MCF 10A (cell line): ENCODE measurements at regions of chr11 and their contacts with region 1.

Region 1: DNA sequence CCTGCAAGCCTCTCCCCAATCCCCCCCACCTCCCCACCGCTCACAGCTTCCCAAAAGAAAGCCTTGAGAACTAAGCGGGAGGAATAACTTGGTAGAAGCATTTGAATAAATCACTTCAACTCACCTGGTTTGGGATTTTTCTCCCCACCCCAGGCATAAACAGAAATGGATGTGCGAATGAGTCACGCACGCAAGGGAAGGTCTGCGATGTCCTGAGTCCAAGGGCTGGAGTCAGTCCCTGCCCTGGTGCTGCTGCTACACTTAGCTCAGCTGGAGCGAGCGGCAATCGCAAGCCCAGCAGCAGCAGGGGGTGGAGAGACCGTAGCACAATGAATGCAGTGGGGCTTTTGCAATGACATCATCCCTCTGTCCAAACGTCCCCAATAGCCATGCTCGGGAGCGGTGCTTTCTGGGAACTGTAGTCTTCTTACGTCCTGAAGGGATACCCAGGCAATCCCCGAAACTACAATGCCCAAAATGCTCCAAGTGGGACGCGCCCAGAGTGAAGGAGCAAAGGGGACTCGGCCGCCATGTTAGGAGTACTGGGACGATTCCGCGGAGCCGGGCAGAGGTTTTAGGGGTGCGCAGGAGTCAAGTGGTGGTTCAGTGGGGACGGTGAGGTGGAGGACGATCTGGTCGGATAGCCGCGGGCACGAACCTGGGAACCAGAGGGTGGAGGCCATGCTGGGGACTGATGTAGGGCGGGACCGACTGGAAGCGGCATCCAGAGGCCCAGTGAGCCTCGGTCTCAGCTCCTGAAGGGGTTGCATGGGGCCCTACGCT is at the start of gene RAB30:
- DNase-seq: peak; percentile 100
- H3K4me3 Mint-ChIP-seq: no peak within 1 kb of the TSS
- H3K27ac Mint-ChIP-seq: no peak within 1 kb of the TSS
- H3K4me1 Mint-ChIP-seq: peaks cover 26% of the 10 kb centered on the region
- H3K27me3 Mint-ChIP-seq: no peaks in the 10 kb centered on the region
- CTCF ChIP-seq: no peak
- total RNA-seq, gene RAB30: 12.5 and 13.2 TPM in 2 replicates

Region 2: GRCh38 chr11:82823647-82824619 is 247.8 kb before region 1 on chr11:
- CTCF ChIA-PET with region 1: no interaction called
- POLR2A ChIA-PET with region 1: no interaction called
- intact Hi-C with region 1: no loop called
- DNase-seq: no peak
- H3K4me3 Mint-ChIP-seq: no peak overlapping the region
- H3K27ac Mint-ChIP-seq: peak overlapping the region; percentile 4
- H3K4me1 Mint-ChIP-seq: peaks cover 3% of the 10 kb centered on the region
- H3K27me3 Mint-ChIP-seq: no peaks in the 10 kb centered on the region
- CTCF ChIP-seq: no peak

Region 3: DNA sequence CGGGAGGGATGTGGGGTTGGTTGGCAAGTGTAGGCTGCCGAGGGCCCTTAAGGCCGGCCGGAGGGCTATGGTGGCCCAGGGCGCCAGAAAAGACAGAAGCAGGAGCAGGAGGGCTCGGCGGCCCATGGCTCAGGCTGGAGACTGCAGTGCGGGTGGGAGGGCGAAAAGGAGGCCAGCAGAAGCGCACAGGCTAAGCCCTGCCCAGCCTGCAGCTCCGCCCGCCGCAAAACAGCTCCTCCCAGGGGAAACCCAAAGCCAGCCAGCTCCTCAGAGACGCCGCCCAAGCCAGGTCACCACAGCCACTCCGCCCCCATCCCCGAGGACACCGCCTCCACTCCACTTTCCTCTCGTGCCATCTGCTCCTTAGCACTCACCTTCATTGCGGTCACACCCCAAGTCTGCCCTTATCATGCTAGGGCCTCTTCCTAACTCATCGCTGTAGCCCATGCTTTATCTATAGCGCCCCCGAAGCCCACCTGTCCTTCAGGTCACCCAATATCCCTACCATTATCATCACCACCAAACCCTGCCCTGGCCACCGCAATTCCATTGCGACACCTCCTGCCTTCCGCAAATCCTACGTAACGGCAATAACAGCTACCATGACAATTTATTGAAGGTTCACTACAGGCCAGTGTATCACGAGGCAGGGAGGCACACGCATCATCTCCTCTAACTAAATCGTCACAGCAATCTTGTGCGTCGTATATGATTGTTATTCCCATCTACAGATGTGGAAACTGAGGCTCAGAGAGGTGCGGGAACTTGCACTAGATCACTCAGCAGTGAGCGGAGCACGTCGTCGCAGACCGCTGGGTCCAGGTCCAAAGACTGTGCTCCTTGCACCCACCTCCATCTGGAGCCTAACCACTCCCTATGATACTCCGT is 171.2 kb before region 1 on chr11 and contains the start of gene PRCP:
- CTCF ChIA-PET with region 1: interaction called, 3 read pairs
- POLR2A ChIA-PET with region 1: interaction called, 46 read pairs
- intact Hi-C with region 1: no loop called
- DNase-seq: peak; percentile 91
- H3K4me3 Mint-ChIP-seq: peak within 1 kb of the TSS; percentile 88
- H3K27ac Mint-ChIP-seq: peak within 1 kb of the TSS; percentile 95
- H3K4me1 Mint-ChIP-seq: peaks cover 38% of the 10 kb centered on the region
- H3K27me3 Mint-ChIP-seq: no peaks in the 10 kb centered on the region
- CTCF ChIP-seq: no peak
- total RNA-seq, gene PRCP: 17.3 and 22.7 TPM in 2 replicates

Region 4: DNA sequence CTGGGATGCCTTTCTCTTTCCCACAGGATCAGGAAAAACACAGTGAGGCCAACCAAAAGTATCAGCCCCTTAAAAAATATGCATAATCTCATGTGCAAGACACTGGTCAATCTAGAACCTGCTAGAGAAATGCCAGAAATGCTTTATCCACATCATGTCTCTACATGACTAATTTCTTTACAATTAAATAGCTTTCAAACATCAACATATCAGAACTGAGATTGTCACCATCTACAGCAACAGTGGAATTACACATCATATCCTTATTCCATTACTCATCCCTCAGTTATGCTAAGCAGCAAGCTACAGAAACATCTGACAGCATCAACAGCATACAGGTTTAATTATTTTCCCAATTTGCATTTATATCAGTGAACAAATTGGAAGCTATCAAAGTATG is 91.5 kb before region 1 on chr11:
- CTCF ChIA-PET with region 1: no interaction called
- POLR2A ChIA-PET with region 1: interaction called, 9 read pairs
- intact Hi-C with region 1: loop called (anchors 2 kb)
- DNase-seq: peak; percentile 34
- H3K4me3 Mint-ChIP-seq: no peak overlapping the region
- H3K27ac Mint-ChIP-seq: no peak overlapping the region
- H3K4me1 Mint-ChIP-seq: peaks cover 26% of the 10 kb centered on the region
- H3K27me3 Mint-ChIP-seq: no peaks in the 10 kb centered on the region
- CTCF ChIP-seq: no peak

Region 5: GRCh38 chr11:83012168-83013067 is 59.3 kb before region 1 on chr11:
- CTCF ChIA-PET with region 1: no interaction called
- POLR2A ChIA-PET with region 1: no interaction called
- intact Hi-C with region 1: no loop called
- DNase-seq: no peak
- H3K4me3 Mint-ChIP-seq: no peak overlapping the region
- H3K27ac Mint-ChIP-seq: no peak overlapping the region
- H3K4me1 Mint-ChIP-seq: peaks cover 6% of the 10 kb centered on the region
- H3K27me3 Mint-ChIP-seq: no peaks in the 10 kb centered on the region
- CTCF ChIP-seq: no peak

Region 6: DNA sequence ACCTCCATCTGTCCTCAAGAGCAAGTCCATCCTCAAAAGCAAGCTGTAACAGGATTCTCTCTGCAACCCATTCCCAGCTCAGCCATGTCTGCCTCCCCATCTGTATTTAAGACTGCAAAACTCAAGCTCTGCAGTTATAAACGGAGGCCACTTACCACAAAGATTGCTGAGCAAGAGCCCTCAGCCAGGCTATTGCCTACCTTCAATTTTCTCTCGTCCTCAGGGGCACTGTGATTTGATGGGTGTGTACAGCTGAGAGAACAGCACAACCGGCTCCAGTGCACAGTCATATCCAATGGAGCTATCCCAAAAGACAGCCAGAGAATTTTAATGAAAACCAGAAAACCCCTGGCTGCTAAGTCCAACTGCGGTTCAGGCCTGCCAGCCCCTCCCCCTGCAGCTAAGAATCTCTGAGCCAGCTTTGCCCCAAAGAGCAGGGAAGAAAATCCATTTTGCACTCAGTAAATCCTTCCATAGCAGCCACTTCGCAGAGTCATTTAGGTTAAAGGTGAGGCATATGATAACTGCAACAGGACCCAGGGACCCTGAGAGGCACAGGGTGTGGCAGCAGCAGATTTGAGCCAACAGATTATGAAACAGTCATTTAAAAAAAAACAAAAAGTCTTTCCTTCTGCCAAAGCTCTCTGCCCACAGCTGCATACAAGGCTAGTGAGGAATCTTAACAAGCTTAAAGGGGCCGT is 37.6 kb before region 1 on chr11:
- CTCF ChIA-PET with region 1: interaction called, 21 read pairs
- POLR2A ChIA-PET with region 1: interaction called, 90 read pairs
- intact Hi-C with region 1: loop called (anchors 5 kb)
- DNase-seq: peak; percentile 77
- H3K4me3 Mint-ChIP-seq: peak overlapping the region; percentile 66
- H3K27ac Mint-ChIP-seq: peak overlapping the region; percentile 72
- H3K4me1 Mint-ChIP-seq: peaks cover 22% of the 10 kb centered on the region
- H3K27me3 Mint-ChIP-seq: no peaks in the 10 kb centered on the region
- CTCF ChIP-seq: no peak

Region 7: GRCh38 chr11:83087035-83087434 is 15.3 kb after region 1 on chr11:
- CTCF ChIA-PET with region 1: interaction called, 7 read pairs
- POLR2A ChIA-PET with region 1: interaction called, 28 read pairs
- intact Hi-C with region 1: no loop called
- DNase-seq: peak; percentile 28
- H3K4me3 Mint-ChIP-seq: no peak overlapping the region
- H3K27ac Mint-ChIP-seq: no peak overlapping the region
- H3K4me1 Mint-ChIP-seq: peaks cover 9% of the 10 kb centered on the region
- H3K27me3 Mint-ChIP-seq: no peaks in the 10 kb centered on the region
- CTCF ChIP-seq: no peak

Region 8: GRCh38 chr11:83249972-83250593 is 178.3 kb after region 1 on chr11:
- CTCF ChIA-PET with region 1: interaction called, 9 read pairs
- POLR2A ChIA-PET with region 1: interaction called, 4 read pairs
- intact Hi-C with region 1: loop called (anchors 10 kb)
- DNase-seq: peak; percentile 53
- H3K4me3 Mint-ChIP-seq: no peak overlapping the region
- H3K27ac Mint-ChIP-seq: no peak overlapping the region
- H3K4me1 Mint-ChIP-seq: no peaks in the 10 kb centered on the region
- H3K27me3 Mint-ChIP-seq: no peaks in the 10 kb centered on the region
- CTCF ChIP-seq: peak; percentile 53